Mammary epithelial cell (primary cell): ENCODE measurements at regions of chr6 and their contacts with region 1.

Region 1: GRCh38 chr6:14210663-14211561 is 93.3 kb downstream of the CD83 start:
- DNase-seq: peak; percentile 83
- H3K4me3 ChIP-seq: peak overlapping the region; percentile 63 to 81 (median 64)
- H3K27ac ChIP-seq: peak overlapping the region; percentile 72
- H3K4me1 ChIP-seq: peaks cover 21% of the 10 kb centered on the region
- H3K27me3 ChIP-seq: no peaks in the 10 kb centered on the region
- CTCF ChIP-seq: peak; percentile 42 to 55

Region 2: DNA sequence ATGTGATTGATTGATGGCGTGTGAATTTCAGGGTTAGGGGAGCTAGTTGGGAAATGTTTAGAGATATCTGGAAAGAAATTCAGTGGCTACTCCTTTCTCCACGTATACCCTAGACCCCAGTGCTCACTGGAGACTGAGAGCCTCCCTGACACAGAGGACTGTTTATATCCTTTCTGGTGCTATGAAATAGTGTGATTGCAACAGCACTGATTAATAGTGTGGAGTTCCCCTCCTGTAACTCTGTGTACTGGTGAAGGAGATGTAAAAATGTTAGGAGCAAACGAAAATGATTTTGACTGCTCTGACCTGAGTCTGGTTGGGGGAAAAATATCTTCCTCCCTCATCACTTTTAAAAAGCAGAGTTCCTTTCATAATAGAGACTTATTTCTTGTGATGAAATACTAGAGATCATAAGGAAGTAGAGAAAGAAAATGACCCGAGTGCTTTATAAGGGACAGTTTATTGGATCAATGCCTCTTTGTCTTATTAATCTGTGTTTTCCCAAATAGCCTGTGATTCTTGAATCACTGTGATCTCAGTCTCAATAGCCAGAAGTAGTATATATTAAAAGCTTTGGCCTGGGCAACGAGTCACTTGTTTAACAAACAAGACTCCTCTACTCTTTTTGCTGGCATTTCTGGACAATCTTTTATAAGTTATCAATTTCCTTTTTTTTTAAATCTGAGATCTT is 193.8 kb before region 1 on chr6:
- CTCF ChIA-PET with region 1: no interaction called
- dilution Hi-C with region 1: no loop called
- in situ Hi-C with region 1: no loop called
- intact Hi-C with region 1: no loop called
- DNase-seq: peak; percentile 31
- H3K4me3 ChIP-seq: no peak overlapping the region
- H3K27ac ChIP-seq: no peak overlapping the region
- H3K4me1 ChIP-seq: no peaks in the 10 kb centered on the region
- H3K27me3 ChIP-seq: no peaks in the 10 kb centered on the region
- CTCF ChIP-seq: no peak

Region 3: DNA sequence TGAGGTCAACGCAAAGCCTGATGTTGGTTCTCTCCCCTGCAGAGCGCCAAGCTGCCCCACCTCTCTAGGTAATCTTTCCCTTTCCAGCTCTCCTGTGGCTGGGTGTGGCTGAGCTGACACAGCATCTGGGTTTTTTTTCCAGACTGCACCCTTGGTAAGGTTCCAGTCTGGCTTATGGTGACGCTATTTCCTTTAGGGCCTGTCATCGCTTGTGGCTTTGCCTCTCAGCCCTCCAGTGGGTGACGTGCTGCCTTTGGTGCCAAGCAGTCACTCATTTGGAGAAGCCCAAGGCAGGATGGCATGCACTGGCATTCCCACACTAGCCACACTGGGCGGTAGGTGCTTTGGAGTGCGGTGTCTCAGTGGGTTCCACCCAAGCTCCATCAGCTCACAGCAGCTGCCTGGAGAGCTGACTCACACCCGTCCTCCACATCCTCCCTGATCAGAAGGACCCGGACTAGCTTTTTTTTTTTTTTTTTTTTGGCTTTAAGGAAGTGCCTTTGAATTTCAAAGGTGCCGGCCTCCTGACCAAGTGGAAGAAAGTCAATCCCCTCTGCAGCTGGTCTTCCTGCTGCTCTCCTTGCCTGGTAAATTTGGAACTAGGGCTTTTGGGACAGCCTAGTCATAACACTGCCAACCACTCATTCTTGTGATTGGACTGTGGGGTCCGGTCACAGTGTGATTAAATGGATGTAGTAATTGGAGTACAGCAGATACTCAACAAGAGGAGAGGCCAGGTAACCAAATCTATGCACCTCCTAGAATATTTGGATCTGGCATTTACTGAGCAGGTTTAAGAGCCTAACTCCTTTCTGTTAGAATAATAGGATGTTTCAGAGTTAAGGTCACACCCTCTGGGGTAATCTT is 60.2 kb after region 1 on chr6:
- CTCF ChIA-PET with region 1: no interaction called
- dilution Hi-C with region 1: no loop called
- in situ Hi-C with region 1: no loop called
- intact Hi-C with region 1: loop called (anchors 1 kb)
- DNase-seq: peak; percentile 100
- H3K4me3 ChIP-seq: no peak overlapping the region
- H3K27ac ChIP-seq: peak overlapping the region; percentile 98
- H3K4me1 ChIP-seq: peaks cover 50% of the 10 kb centered on the region
- H3K27me3 ChIP-seq: no peaks in the 10 kb centered on the region
- CTCF ChIP-seq: peak in 1 of 2 donors; percentile 39

Region 4: DNA sequence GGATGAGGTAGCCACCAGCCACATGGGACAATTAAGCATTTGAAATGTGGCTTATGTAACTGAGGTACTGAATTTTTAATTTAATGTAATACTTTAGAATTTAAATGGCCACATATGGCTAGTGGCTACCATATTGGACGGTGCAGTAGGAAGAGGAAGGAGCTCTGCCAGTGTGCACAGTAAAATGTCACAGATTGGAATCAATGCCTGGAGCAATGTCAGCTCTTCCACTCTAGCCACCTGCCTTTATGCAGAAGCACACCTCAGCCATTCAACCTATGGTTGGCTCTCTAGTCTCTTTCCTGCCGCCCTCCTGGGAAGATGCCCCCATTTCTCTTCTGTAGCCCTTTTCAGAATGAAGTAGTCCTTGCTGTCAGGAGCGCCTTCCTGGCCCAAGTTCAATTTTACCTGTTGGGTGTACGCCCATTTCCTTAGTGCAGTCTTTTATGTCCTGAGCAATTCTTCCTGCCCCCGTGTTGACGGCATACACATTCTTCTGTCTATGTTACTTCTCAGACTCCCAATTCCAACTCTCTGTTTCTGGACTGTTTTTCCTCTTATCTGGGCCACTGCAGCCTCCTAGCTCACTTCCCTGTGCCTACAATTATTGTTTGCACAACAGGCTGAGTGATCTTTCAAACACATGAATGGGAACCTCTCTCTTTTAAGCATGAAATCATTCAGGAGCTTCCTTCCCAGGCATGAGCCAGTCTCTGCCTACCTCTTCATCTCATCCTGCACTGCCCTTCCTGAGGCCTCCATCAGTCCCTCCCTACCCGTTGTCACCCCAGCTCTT is 295.7 kb after region 1 on chr6:
- CTCF ChIA-PET with region 1: no interaction called
- dilution Hi-C with region 1: no loop called
- in situ Hi-C with region 1: no loop called
- intact Hi-C with region 1: loop called (anchors 5 kb)
- DNase-seq: no peak
- H3K4me3 ChIP-seq: no peak overlapping the region
- H3K27ac ChIP-seq: no peak overlapping the region
- H3K4me1 ChIP-seq: peaks cover 4% of the 10 kb centered on the region
- H3K27me3 ChIP-seq: no peaks in the 10 kb centered on the region
- CTCF ChIP-seq: no peak

Region 5: DNA sequence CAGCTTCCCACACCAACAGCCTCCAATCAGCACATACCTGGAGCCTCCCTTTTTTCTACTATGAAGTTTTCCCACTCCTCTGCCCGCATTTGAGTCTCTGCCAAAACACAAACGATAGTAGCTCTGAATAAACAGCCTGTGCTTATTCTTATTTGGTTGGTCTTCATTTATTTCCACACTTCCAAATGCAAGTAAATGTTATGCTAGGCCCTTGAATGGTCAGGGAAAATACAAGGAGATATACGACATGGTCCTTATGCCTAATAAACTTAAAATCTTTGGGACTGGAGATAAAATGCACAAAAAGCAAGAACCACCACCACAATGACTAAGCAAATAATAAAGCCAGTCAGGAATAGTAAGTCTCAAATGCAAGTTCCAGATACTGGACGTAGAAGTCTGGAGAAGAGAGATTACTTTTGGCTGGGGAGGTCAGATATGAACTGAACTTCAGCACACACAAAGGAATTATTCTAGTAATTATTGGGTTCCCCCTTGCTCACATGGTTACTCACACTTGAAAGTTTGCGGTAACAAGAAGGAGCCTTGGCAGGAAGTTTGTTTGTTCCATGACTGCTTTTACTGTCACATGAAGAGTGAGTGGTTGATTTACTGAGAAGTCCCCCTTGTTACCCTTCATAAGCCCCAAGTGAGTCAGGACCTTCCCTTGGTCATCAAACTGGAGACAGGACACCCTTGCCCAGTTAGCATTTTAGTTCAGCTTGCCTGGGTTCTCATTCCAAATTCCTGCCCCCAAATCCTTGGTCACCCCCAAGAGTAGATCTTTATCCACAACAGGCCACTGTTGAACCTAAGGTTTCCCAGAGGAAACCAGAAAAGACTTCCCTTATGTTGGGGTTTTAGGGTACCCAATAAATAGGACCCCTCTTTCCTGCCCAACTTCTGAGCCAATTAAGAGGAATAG is 523.8 kb after region 1 on chr6:
- CTCF ChIA-PET with region 1: no interaction called
- dilution Hi-C with region 1: no loop called
- in situ Hi-C with region 1: no loop called
- intact Hi-C with region 1: loop called (anchors 1 kb)
- DNase-seq: peak; percentile 67
- H3K4me3 ChIP-seq: no peak overlapping the region
- H3K27ac ChIP-seq: peak overlapping the region; percentile 99
- H3K4me1 ChIP-seq: peaks cover 36% of the 10 kb centered on the region
- H3K27me3 ChIP-seq: no peaks in the 10 kb centered on the region
- CTCF ChIP-seq: no peak

Region 6: GRCh38 chr6:15254070-15254841 is 1043.3 kb after region 1 on chr6:
- CTCF ChIA-PET with region 1: no interaction called
- dilution Hi-C with region 1: no loop called
- in situ Hi-C with region 1: loop called in 1 of 2 experiments (anchors 10 kb)
- intact Hi-C with region 1: no loop called
- DNase-seq: no peak
- H3K4me3 ChIP-seq: no peak overlapping the region
- H3K27ac ChIP-seq: no peak overlapping the region
- H3K4me1 ChIP-seq: peaks cover 11% of the 10 kb centered on the region
- H3K27me3 ChIP-seq: no peaks in the 10 kb centered on the region
- CTCF ChIP-seq: peak in 1 of 2 donors; percentile 15

Region 7: GRCh38 chr6:15441215-15441868 is 1230.4 kb after region 1 on chr6:
- CTCF ChIA-PET with region 1: no interaction called
- dilution Hi-C with region 1: no loop called
- in situ Hi-C with region 1: no loop called
- intact Hi-C with region 1: loop called (anchors 2 kb)
- DNase-seq: peak; percentile 50
- H3K4me3 ChIP-seq: no peak overlapping the region
- H3K27ac ChIP-seq: no peak overlapping the region
- H3K4me1 ChIP-seq: peaks cover 33% of the 10 kb centered on the region
- H3K27me3 ChIP-seq: no peaks in the 10 kb centered on the region
- CTCF ChIP-seq: peak; percentile 81 to 88

Region 8: DNA sequence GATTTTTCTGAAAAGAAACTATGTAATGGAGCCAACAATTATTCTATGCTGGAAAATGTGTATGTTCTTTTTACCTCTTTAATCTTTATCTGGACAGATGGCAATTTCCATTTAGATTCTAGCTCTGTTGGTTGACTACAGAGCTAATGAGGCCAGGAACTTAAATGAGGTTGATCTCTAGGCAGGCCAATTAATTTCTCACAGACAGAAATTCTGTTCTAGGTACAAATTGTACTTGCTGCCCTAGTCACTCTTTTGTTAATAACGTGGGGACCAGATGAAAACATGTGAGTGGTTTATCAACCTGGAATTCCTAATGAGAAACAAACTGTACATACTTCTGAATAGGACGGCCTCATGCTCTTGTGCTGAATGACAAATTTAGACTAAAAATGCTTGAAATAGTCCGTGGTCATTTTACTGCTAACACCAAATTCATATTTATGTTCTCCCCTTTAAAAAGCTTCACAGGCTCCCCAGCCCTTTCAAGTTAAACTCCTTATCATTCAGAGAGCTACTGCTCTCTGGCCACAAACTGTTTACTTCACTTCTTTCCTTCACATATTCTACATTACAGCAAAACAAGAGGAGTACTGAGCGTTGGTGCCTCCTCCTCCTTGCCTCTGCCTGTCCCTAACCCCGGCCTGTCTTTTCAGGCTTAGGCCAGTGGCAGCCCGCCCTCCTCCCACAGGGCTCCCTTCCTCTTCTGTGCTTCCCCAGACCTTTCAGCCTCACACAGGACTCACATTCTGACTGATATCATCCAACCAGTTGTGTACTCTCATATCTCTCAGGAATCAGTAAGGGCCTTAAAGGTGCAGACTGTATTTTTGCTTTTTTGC is 1410.5 kb after region 1 on chr6:
- CTCF ChIA-PET with region 1: no interaction called
- dilution Hi-C with region 1: no loop called
- in situ Hi-C with region 1: loop called in 1 of 2 experiments (anchors 25 kb)
- intact Hi-C with region 1: loop called (anchors 1 kb)
- DNase-seq: peak; percentile 73
- H3K4me3 ChIP-seq: no peak overlapping the region
- H3K27ac ChIP-seq: peak overlapping the region; percentile 43
- H3K4me1 ChIP-seq: peaks cover 15% of the 10 kb centered on the region
- H3K27me3 ChIP-seq: no peaks in the 10 kb centered on the region
- CTCF ChIP-seq: no peak